IMR-90 (cell line): ENCODE measurements at regions of chr16 and their contacts with region 1.

Region 1: DNA sequence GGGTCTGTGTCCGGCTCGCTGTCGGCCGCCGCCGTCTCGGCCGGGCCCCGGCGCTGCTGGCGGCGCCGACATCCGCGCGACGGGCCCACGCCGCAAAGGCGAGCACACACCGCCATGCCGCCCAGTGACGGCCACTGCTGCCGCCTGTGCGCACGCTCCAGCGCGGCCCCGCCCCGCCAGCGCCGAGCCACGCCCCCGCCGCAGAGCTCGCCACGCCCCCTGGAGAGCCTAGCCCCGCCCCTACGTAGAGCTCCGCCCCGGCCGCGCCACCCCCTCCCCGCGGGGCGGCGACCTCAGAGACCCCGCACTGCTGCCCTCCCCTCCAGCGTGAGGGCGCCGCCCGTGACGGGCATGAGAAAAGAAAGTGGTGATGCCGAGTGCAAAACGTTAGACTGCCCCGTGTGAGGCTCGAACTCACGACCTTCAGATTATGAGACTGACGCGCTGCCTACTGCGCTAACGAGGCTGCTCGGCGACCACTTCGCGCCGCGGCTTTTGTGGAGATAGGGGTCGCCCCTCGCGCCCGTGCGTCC is at the start of gene FBXO31:
- DNase-seq: peak; percentile 94
- ATAC-seq: peak; percentile 87
- H3K4me3 ChIP-seq: peak within 1 kb of the TSS; percentile 52
- H3K27ac ChIP-seq: peak within 1 kb of the TSS; percentile 72
- H3K4me1 ChIP-seq: peaks cover 16% of the 10 kb centered on the region
- H3K27me3 ChIP-seq: no peaks in the 10 kb centered on the region
- CTCF ChIP-seq: no peak; the same call in 1 of the 2 replicates
- POLR2A ChIP-seq: peak; percentile 69
- RAD21 ChIP-seq: no peak
- total RNA-seq, gene FBXO31: 10.4 and 10.6 TPM in 2 replicates

Region 2: GRCh38 chr16:87324411-87325275 is 59.1 kb before region 1 on chr16:
- CTCF ChIA-PET with region 1: no interaction called
- POLR2A ChIA-PET with region 1: no interaction called
- dilution Hi-C with region 1: no loop called
- in situ Hi-C with region 1: no loop called
- intact Hi-C with region 1: loop called (anchors 2 kb)
- DNase-seq: peak; percentile 10
- ATAC-seq: peak; percentile 78
- H3K4me3 ChIP-seq: no peak overlapping the region
- H3K27ac ChIP-seq: no peak overlapping the region
- H3K4me1 ChIP-seq: peaks cover 6% of the 10 kb centered on the region; the same call in 1 of the 2 replicates
- H3K27me3 ChIP-seq: no peaks in the 10 kb centered on the region
- CTCF ChIP-seq: peak; percentile 66
- POLR2A ChIP-seq: no peak
- RAD21 ChIP-seq: peak; percentile 58